IMR-90 (cell line): ENCODE measurements at regions of chr5 and their contacts with region 1.

Region 1: GRCh38 chr5:157366741-157367674 is 93.0 kb upstream of the NIPAL4 start:
- DNase-seq: peak; percentile 84
- ATAC-seq: peak; percentile 78
- H3K4me3 ChIP-seq: no peak overlapping the region
- H3K27ac ChIP-seq: no peak overlapping the region
- H3K4me1 ChIP-seq: peaks cover 5% of the 10 kb centered on the region
- H3K27me3 ChIP-seq: no peaks in the 10 kb centered on the region
- CTCF ChIP-seq: peak; percentile 92
- POLR2A ChIP-seq: no peak
- RAD21 ChIP-seq: peak; percentile 96

Region 2: GRCh38 chr5:157253547-157253946 is 113.5 kb before region 1 on chr5:
- CTCF ChIA-PET with region 1: no interaction called
- POLR2A ChIA-PET with region 1: no interaction called
- dilution Hi-C with region 1: no loop called
- in situ Hi-C with region 1: no loop called
- intact Hi-C with region 1: no loop called
- DNase-seq: peak; percentile 47
- ATAC-seq: peak; percentile 96
- H3K4me3 ChIP-seq: no peak overlapping the region
- H3K27ac ChIP-seq: no peak overlapping the region
- H3K4me1 ChIP-seq: no peaks in the 10 kb centered on the region; the same call in 1 of the 2 replicates
- H3K27me3 ChIP-seq: peaks cover 11% of the 10 kb centered on the region
- CTCF ChIP-seq: peak; percentile 93
- POLR2A ChIP-seq: no peak
- RAD21 ChIP-seq: peak; percentile 88

Region 3: GRCh38 chr5:157328277-157328912 is 38.6 kb before region 1 on chr5:
- CTCF ChIA-PET with region 1: no interaction called
- POLR2A ChIA-PET with region 1: no interaction called
- dilution Hi-C with region 1: no loop called
- in situ Hi-C with region 1: no loop called
- intact Hi-C with region 1: loop called (anchors 5 kb)
- DNase-seq: peak; percentile 81
- ATAC-seq: peak; percentile 100
- H3K4me3 ChIP-seq: peak overlapping the region; percentile 13; the same call in 1 of the 2 replicates
- H3K27ac ChIP-seq: no peak overlapping the region
- H3K4me1 ChIP-seq: no peaks in the 10 kb centered on the region
- H3K27me3 ChIP-seq: no peaks in the 10 kb centered on the region
- CTCF ChIP-seq: peak; percentile 97
- POLR2A ChIP-seq: peak; percentile 41; the same call in 1 of the 2 replicates
- RAD21 ChIP-seq: peak; percentile 98

Region 4: GRCh38 chr5:157431544-157432200 is 64.7 kb after region 1 on chr5:
- CTCF ChIA-PET with region 1: interaction called, 3 read pairs
- POLR2A ChIA-PET with region 1: no interaction called
- dilution Hi-C with region 1: no loop called
- in situ Hi-C with region 1: no loop called
- intact Hi-C with region 1: loop called (anchors 2 kb)
- DNase-seq: peak; percentile 69
- ATAC-seq: peak; percentile 98
- H3K4me3 ChIP-seq: no peak overlapping the region
- H3K27ac ChIP-seq: no peak overlapping the region
- H3K4me1 ChIP-seq: no peaks in the 10 kb centered on the region
- H3K27me3 ChIP-seq: no peaks in the 10 kb centered on the region
- CTCF ChIP-seq: peak; percentile 59
- POLR2A ChIP-seq: no peak
- RAD21 ChIP-seq: peak; percentile 65

Region 5: DNA sequence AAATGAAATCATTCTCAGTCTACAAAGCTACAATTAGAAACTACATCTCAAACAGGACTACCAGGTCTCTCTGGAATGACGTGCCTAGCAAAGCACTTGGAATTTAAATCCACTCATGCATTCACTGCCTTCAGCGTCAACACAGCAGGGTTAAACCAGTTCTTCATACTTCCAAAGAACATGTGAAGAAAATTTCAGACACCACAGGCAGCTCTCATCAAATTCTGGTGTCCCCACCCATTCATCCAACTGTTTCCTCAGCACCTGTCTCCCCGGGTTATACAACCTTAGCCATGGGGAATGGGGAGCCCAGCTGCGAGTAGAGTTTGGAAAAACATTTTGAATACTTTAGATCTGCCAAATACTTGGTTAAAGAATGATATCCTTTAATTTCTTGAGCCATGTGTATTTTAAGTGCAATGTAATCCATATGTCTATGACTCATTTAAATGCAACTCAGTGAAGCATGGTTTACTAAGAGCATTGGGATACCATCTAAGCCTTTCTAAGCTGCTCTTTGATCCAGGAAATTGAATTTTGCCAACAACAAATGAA is 191.1 kb after region 1 on chr5:
- CTCF ChIA-PET with region 1: no interaction called
- POLR2A ChIA-PET with region 1: no interaction called
- dilution Hi-C with region 1: no loop called
- in situ Hi-C with region 1: no loop called
- intact Hi-C with region 1: loop called (anchors 5 kb)
- DNase-seq: peak; percentile 86
- ATAC-seq: peak; percentile 66
- H3K4me3 ChIP-seq: no peak overlapping the region
- H3K27ac ChIP-seq: peak overlapping the region; percentile 80
- H3K4me1 ChIP-seq: peaks cover 52% of the 10 kb centered on the region
- H3K27me3 ChIP-seq: no peaks in the 10 kb centered on the region
- CTCF ChIP-seq: no peak
- POLR2A ChIP-seq: no peak
- RAD21 ChIP-seq: no peak

Region 6: GRCh38 chr5:157689942-157690689 is 323.1 kb after region 1 on chr5:
- CTCF ChIA-PET with region 1: no interaction called
- POLR2A ChIA-PET with region 1: no interaction called
- dilution Hi-C with region 1: no loop called
- in situ Hi-C with region 1: no loop called
- intact Hi-C with region 1: no loop called
- DNase-seq: no peak
- ATAC-seq: no peak
- H3K4me3 ChIP-seq: no peak overlapping the region
- H3K27ac ChIP-seq: no peak overlapping the region
- H3K4me1 ChIP-seq: no peaks in the 10 kb centered on the region
- H3K27me3 ChIP-seq: no peaks in the 10 kb centered on the region
- CTCF ChIP-seq: no peak
- POLR2A ChIP-seq: no peak
- RAD21 ChIP-seq: no peak

Region 7: DNA sequence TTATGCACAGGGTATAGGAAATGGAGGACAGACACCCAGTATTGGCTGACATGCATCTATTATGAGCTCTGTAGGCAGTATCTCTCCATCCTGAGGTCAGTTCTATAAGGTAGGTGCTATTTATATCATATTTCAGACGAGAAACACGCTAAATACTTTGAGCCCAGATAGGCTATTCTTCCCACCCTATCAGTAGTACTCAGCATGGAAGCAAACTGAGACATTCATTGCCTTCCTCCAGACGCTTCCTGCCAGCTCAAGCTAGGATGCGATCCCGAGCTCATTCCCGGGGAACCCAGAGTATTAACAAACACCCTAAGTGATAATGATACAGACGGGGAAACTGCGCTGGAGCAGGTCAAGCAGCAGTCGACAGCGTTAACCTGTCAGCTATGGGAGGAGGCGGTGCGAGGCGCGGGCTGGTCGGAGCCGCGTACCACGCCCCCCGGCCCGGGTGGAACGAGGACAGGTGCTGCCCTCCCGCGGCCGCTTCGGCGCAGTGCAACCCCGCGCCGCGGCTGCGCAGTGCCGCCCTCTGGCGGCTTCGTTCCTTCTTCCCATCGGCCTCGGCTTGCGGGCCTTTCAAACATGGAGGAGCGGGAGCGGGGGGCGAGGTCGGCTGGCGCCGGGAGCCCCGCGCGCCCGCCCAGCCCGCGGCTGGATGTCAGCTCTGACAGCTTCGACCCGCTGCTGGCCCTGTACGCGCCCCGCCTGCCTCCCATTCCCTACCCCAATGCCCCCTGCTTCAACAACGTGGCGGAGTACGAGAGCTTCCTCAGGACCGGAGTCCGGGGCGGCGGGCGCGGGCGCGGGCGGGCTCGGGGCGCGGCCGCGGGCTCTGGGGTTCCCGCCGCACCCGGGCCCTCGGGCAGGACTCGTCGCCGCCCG is 376.4 kb after region 1 on chr5 and contains the start of gene LSM11:
- CTCF ChIA-PET with region 1: interaction called, 4 read pairs
- POLR2A ChIA-PET with region 1: no interaction called
- dilution Hi-C with region 1: no loop called
- in situ Hi-C with region 1: no loop called
- intact Hi-C with region 1: loop called (anchors 1 kb)
- DNase-seq: peak; percentile 72
- ATAC-seq: peak; percentile 98
- H3K4me3 ChIP-seq: peak within 1 kb of the TSS; percentile 72
- H3K27ac ChIP-seq: peak within 1 kb of the TSS; percentile 52; the same call in 1 of the 2 replicates
- H3K4me1 ChIP-seq: peaks cover under 1% of the 10 kb centered on the region
- H3K27me3 ChIP-seq: no peaks in the 10 kb centered on the region
- CTCF ChIP-seq: peak; percentile 100; the same call in 1 of the 2 replicates
- POLR2A ChIP-seq: 0 out of 2 replicates have a peak, but pooled peaks have one; percentile 48
- RAD21 ChIP-seq: peak; percentile 86
- total RNA-seq, gene LSM11: 3.0 and 3.9 TPM in 2 replicates